B cell (primary cell): ENCODE measurements at regions of chr2 and their contacts with region 1.

Region 1: DNA sequence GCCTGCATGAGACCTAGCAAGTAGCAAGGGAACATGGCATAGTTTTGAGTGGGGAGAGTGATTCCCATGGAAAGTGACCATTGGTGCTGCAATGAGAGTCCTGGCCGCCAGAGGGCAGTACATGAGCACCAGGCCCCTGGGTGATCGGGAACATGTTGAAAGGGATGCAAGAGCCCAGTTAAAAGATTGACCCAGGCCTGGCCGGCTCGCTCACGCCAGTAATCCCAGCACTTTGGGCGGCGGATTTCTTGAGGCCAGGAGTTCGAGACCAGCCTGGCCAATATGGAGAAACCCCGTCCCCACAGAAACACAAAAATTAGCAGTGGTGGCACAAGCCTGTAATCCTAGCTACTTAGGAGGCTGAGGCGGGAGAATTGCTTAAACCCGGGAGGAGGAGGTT is 22.2 kb downstream of the FAP start:
- DNase-seq: peak; percentile 57
- ATAC-seq: peak; percentile 58
- H3K4me3 ChIP-seq: no peak overlapping the region
- H3K4me3 Mint-ChIP-seq: no peak overlapping the region
- H3K27ac ChIP-seq: no peak overlapping the region
- H3K27ac Mint-ChIP-seq: no peak overlapping the region
- H3K4me1 ChIP-seq: no peaks in the 10 kb centered on the region
- H3K4me1 Mint-ChIP-seq: no peaks in the 10 kb centered on the region
- H3K27me3 ChIP-seq: no peaks in the 10 kb centered on the region
- H3K27me3 Mint-ChIP-seq: peaks cover 11% of the 10 kb centered on the region
- CTCF ChIP-seq: peak; percentile 87

Region 2: GRCh38 chr2:162232671-162233070 is 11.6 kb after region 1 on chr2:
- CTCF ChIA-PET with region 1: interaction called, 21 read pairs
- POLR2A ChIA-PET with region 1: no interaction called
- intact Hi-C with region 1: no loop called
- DNase-seq: no peak
- ATAC-seq: no peak
- H3K4me3 ChIP-seq: no peak overlapping the region
- H3K4me3 Mint-ChIP-seq: no peak overlapping the region
- H3K27ac ChIP-seq: no peak overlapping the region
- H3K27ac Mint-ChIP-seq: no peak overlapping the region
- H3K4me1 ChIP-seq: no peaks in the 10 kb centered on the region
- H3K4me1 Mint-ChIP-seq: no peaks in the 10 kb centered on the region
- H3K27me3 ChIP-seq: peaks cover 0 to 3% (median 0%) of the 10 kb centered on the region in 4 experiments
- H3K27me3 Mint-ChIP-seq: peaks cover 14% of the 10 kb centered on the region
- CTCF ChIP-seq: no peak

Region 3: DNA sequence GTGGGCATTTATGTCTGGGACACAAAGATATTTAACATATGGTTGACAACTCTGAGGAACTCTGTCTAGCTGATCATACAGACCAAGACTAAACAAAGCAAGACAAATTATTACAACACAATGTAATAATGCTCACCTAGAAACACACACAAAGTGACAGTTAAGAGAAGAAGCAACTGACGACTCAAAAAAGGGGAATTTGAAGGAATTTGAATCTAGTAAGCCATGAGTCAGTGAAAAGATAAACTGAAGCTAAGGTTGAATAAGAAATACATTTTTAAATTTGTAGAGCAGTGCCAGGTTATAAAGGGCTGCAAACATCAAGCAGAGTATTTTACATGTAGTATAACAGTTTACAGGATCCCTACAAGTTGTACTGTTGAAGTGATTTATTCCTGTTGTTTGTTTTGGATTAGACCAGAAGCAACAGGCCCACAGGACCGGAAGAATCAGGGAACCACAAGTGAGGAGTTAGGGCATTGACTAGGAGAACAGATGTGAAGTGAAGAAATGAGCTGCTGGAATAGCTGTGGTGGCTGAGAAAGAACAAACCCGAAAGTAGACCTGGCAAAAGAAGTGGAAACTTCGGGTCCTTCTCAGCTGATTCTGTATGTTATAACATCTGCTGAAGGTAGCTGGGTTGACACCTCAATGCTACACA is 61.8 kb after region 1 on chr2:
- CTCF ChIA-PET with region 1: interaction called, 10 read pairs
- POLR2A ChIA-PET with region 1: no interaction called
- intact Hi-C with region 1: no loop called
- DNase-seq: no peak
- ATAC-seq: no peak
- H3K4me3 ChIP-seq: no peak overlapping the region
- H3K4me3 Mint-ChIP-seq: no peak overlapping the region
- H3K27ac ChIP-seq: no peak overlapping the region
- H3K27ac Mint-ChIP-seq: no peak overlapping the region
- H3K4me1 ChIP-seq: no peaks in the 10 kb centered on the region
- H3K4me1 Mint-ChIP-seq: no peaks in the 10 kb centered on the region
- H3K27me3 ChIP-seq: no peaks in the 10 kb centered on the region
- H3K27me3 Mint-ChIP-seq: no peaks in the 10 kb centered on the region
- CTCF ChIP-seq: no peak

Region 4: DNA sequence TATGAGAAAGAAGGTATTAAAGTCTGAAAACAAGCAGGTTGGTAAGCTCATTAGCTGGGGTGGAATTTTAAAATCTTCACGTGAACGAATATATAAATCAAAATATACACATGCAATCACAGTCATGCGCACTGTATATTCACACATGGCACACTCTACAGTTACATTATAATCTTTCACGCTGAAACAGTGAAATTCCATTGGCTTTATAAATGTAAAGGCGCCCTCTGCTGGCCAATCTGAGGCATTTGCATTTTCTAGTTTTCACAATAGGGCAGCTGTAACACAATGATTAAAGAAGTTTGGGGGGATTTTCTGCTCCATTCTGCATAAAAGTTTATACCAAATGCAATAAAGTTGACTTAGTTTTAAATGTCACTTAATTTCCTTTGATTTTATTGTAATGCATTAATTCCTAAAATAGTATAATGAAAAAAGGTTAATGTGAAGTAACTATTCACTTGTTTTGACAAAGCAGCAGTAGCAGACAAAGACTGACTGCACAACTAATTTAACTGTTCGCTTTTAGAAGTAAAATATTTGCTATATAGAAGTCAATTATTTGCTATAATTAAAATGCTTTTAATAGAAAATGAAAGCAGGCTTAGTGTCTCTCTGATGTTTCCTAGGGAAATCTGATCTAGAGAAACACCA is 80.2 kb after region 1 on chr2:
- CTCF ChIA-PET with region 1: interaction called, 68 read pairs
- POLR2A ChIA-PET with region 1: no interaction called
- intact Hi-C with region 1: loop called (anchors 1 kb)
- DNase-seq: peak; percentile 72
- ATAC-seq: peak; percentile 68
- H3K4me3 ChIP-seq: no peak overlapping the region
- H3K4me3 Mint-ChIP-seq: no peak overlapping the region
- H3K27ac ChIP-seq: no peak overlapping the region
- H3K27ac Mint-ChIP-seq: no peak overlapping the region
- H3K4me1 ChIP-seq: no peaks in the 10 kb centered on the region
- H3K4me1 Mint-ChIP-seq: peaks cover 2% of the 10 kb centered on the region
- H3K27me3 ChIP-seq: no peaks in the 10 kb centered on the region
- H3K27me3 Mint-ChIP-seq: no peaks in the 10 kb centered on the region
- CTCF ChIP-seq: peak; percentile 97